ENCODE measurements at regions of chr11 and their contacts with region 1.

Region 1: DNA sequence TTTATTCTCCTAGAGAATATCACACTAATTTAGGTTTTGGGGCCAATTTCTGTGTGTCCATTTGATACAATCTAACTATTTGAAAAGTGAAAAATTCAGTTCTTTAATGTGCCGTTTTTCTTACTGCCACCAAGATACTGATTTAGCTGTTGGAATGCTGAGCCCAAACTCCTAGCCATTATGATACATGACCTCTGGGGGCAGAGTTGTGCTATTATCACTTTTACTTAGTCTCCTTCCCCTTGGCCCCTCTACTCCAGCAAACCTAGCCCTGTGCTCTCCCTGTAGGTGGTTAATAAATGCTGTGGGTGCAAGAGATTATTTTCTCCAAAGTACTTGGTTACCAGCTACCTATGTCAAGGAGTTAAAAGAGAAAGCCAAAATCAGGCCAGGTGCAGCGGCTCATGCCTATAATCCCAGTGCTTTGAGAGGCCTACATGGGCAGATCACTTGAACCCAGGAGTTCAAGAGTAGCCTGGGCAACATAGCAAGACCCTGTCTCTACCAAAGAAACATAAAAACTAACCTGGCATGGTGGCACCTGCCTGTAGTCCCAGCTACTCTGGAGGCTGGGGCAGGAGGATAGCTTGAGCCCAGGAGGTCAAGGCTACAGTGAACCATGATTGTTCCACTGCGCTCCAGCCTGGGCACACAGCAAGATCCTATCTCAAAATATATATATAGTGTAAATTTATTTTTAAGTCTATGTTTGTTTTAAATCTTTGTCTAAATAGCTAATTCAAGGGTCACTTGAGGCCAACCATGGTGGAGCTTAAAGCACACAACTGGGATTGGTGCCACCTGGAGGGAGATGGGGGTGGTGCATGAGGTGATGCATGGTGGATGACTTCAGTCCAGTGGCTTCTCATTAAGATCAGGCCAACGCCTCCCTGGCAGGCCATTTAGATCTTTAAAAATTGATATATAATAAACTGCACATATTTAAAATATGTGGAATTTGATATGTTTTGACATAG is 193.2 kb upstream of the PLET1 start:
- DNase-seq: peak; percentile 51
- H3K4me3 ChIP-seq: no peak overlapping the region
- H3K27ac ChIP-seq: no peak overlapping the region
- H3K4me1 ChIP-seq: peaks cover 0 to 9% of the 10 kb centered on the region in 2 experiments; a peak in 1 of 4 replicates
- H3K27me3 ChIP-seq: no peaks in the 10 kb centered on the region; the same call in 1 of the 2 replicates
- CTCF ChIP-seq: peak; percentile 52
- EP300 ChIP-seq: no peak
- RAD21 ChIP-seq: peak; percentile 44

Region 2: GRCh38 chr11:111851636-111852035 is 602.3 kb before region 1 on chr11:
- CTCF ChIA-PET with region 1: no interaction called
- POLR2A ChIA-PET with region 1: no interaction called
- DNase-seq: peak; percentile 17
- H3K4me3 ChIP-seq: no peak overlapping the region
- H3K27ac ChIP-seq: no peak overlapping the region
- H3K4me1 ChIP-seq: peaks cover 6 to 13% of the 10 kb centered on the region in 2 experiments; a peak in 3 of 4 replicates
- H3K27me3 ChIP-seq: no peaks in the 10 kb centered on the region
- CTCF ChIP-seq: peak; percentile 56
- EP300 ChIP-seq: no peak
- RAD21 ChIP-seq: peak; percentile 60

Region 3: DNA sequence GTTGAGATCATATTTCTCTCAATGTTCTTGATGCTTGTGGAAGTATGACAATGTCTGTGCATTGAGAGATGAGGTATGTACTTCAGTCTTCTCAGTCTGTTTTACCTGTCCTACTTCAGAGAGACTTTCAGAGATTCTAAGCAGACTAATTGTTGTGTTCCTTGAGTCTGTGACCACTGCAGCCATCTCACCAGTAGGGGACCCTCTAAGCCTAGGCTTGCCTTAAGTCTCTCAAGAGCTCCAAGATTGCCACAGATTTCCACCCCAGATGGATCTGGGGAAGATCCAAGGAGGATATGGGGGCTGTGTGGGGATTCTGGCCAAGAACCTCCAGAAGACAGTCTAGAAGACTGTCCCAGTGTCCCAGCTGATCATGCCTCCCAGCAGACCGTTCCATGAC is 13.4 kb before region 1 on chr11:
- CTCF ChIA-PET with region 1: interaction called, 10 read pairs
- POLR2A ChIA-PET with region 1: no interaction called
- DNase-seq: no peak
- H3K4me3 ChIP-seq: no peak overlapping the region
- H3K27ac ChIP-seq: no peak overlapping the region
- H3K4me1 ChIP-seq: no peaks in the 10 kb centered on the region
- H3K27me3 ChIP-seq: no peaks in the 10 kb centered on the region
- CTCF ChIP-seq: 0 out of 2 replicates have a peak, but pooled peaks have one; percentile 14
- EP300 ChIP-seq: no peak
- RAD21 ChIP-seq: 0 out of 2 replicates have a peak, but pooled peaks have one; percentile 18

Region 4: DNA sequence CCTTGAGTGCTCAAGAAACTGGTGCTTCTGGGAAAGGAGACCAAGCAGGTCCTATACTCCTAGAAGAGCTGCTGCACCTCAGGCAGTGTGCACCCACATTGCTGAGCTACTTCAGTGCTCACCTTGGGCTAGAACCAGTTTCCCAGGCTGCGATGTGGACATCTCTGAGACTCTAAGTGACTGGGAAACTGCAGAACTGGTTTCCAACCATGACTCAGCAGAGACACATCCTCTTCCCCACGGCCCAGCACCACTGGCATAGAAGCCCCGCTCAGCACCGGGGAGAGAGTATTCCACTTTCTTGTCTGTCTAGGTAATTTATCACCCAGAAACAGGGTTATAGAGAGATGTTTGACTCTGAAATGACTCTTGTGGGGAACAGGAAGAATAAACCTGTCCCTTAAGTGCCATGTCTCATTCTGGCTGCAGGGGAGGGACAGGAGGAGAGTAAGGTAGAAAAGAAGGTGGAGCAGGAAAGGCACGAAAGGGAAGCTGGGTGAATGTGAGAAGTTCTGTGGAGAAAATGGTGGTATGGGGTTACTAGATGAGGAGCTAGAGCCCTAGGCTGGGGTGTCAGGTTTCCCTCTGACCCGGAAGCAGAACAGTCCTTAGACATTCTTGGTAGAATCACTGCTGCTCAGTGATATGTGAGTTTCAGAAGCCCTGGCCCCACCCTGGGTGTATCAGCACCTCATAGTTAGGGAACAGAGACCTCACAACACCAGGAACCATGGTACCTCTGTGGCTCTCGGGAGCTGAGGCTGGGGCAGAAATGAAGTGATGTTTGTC is 166.9 kb after region 1 on chr11:
- CTCF ChIA-PET with region 1: no interaction called
- POLR2A ChIA-PET with region 1: no interaction called
- DNase-seq: no peak
- H3K4me3 ChIP-seq: no peak overlapping the region
- H3K27ac ChIP-seq: no peak overlapping the region
- H3K4me1 ChIP-seq: peaks cover 7 to 8% of the 10 kb centered on the region in 2 experiments; a peak in 2 of 4 replicates
- H3K27me3 ChIP-seq: no peaks in the 10 kb centered on the region
- CTCF ChIP-seq: no peak
- EP300 ChIP-seq: no peak
- RAD21 ChIP-seq: no peak